PC-9 (cell line): ENCODE measurements at regions of chr6 and their contacts with region 1.

Region 1: GRCh38 chr6:5058254-5058653 is 26.9 kb upstream of the PPP1R3G start:
- DNase-seq: no peak
- H3K4me3 ChIP-seq: no peak overlapping the region
- H3K27ac ChIP-seq: no peak overlapping the region
- H3K4me1 ChIP-seq: no peaks in the 10 kb centered on the region
- H3K27me3 ChIP-seq: no peaks in the 10 kb centered on the region
- CTCF ChIP-seq: no peak

Region 2: GRCh38 chr6:4864519-4864918 is 193.7 kb before region 1 on chr6:
- CTCF ChIA-PET with region 1: no interaction called
- POLR2A ChIA-PET with region 1: no interaction called
- intact Hi-C with region 1: no loop called
- DNase-seq: no peak
- H3K4me3 ChIP-seq: no peak overlapping the region
- H3K27ac ChIP-seq: peak overlapping the region; percentile 47; the same call in 1 of the 2 replicates
- H3K4me1 ChIP-seq: no peaks in the 10 kb centered on the region
- H3K27me3 ChIP-seq: no peaks in the 10 kb centered on the region
- CTCF ChIP-seq: no peak

Region 3: GRCh38 chr6:5246141-5247097 is 188.2 kb after region 1 on chr6:
- CTCF ChIA-PET with region 1: interaction called, 14 read pairs
- POLR2A ChIA-PET with region 1: no interaction called
- intact Hi-C with region 1: no loop called
- DNase-seq: no peak
- H3K4me3 ChIP-seq: no peak overlapping the region
- H3K27ac ChIP-seq: no peak overlapping the region
- H3K4me1 ChIP-seq: peaks cover 14% of the 10 kb centered on the region; the same call in 1 of the 2 replicates
- H3K27me3 ChIP-seq: no peaks in the 10 kb centered on the region
- CTCF ChIP-seq: no peak

Region 4: GRCh38 chr6:5379647-5380242 is 321.5 kb after region 1 on chr6:
- CTCF ChIA-PET with region 1: no interaction called
- POLR2A ChIA-PET with region 1: no interaction called
- intact Hi-C with region 1: loop called (anchors 5 kb)
- DNase-seq: peak in 1 of 2 experiments; percentile 22
- H3K4me3 ChIP-seq: no peak overlapping the region
- H3K27ac ChIP-seq: no peak overlapping the region
- H3K4me1 ChIP-seq: no peaks in the 10 kb centered on the region
- H3K27me3 ChIP-seq: no peaks in the 10 kb centered on the region
- CTCF ChIP-seq: peak; percentile 72